Ascending aorta (tissue), 2 donors: ENCODE measurements at regions of chr2 and their contacts with region 1.

Region 1: DNA sequence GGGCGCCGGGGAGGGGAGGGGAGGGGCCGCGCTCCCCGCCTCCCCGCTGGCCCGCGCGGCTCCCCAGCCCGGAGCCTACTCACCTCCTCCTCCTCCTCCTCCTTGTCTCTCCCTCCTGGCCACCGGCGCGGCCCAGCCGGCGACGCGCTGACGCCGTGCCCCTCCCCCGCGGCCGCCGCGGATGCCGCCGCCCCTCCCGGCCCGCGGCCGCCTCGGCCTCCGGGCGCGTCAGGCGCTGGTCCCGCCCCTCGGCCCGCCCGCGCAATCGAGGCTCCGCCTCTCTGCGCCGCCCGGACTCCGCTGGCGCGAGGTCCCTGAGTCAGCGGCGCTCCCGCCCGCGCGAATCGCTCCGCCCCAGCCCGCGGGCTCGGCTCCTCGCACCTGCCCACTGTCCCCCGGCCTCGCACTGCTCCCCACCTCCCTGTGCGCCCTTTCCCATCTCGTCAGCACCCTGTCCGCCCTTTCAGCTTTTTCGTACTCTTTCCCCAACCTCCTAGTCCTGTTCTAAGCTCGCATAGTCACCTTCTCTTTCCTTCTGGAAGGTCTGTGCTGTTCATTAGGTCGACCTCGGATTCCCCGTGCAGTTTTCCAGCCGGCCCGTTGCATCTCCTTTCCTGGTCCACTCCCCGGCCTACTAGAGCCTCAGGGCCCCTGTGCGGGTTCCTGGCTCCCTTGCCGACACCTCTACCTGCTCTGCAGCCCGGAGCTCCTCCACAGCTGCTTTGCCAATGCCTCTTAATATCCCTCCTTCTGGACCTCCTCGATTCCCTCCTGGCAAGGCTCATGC is 187.4 kb downstream of the ZEB2 start:
- DNase-seq: peak; percentile 33 to 92
- H3K4me3 ChIP-seq: peak overlapping the region; percentile 66 to 94
- H3K27ac ChIP-seq: peak overlapping the region; percentile 85 to 88
- H3K4me1 ChIP-seq: no peaks in the 10 kb centered on the region
- H3K27me3 ChIP-seq: no peaks in the 10 kb centered on the region
- CTCF ChIP-seq: no peak

Region 2: GRCh38 chr2:144382849-144383248 is 50.3 kb after region 1 on chr2:
- intact Hi-C with region 1: loop called (anchors 2 kb)
- DNase-seq: no peak
- H3K4me3 ChIP-seq: no peak overlapping the region
- H3K27ac ChIP-seq: peak overlapping the region in 1 of 2 donors; percentile 17
- H3K4me1 ChIP-seq: peaks cover 0 to 7% of the 10 kb centered on the region in 2 donors
- H3K27me3 ChIP-seq: no peaks in the 10 kb centered on the region
- CTCF ChIP-seq: no peak

Region 3: DNA sequence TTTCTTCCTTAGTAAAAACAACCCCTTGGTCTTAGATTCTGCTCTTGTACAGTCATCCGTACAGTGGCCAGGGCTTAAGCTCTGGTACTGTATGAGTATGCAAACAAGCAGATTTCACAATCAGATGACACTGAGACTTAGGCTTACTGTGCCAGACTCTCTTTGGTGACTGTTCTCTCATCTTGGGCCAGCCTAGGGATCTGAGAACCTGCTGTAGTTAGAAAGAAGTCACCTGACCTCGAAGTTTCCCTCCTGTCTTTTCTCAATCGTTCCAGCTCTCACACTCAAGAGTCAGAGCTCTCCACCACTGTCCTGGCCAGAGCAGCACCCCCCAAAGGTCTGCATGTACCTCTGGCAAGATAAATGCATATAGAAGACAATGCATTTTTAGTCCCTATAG is 124.1 kb after region 1 on chr2:
- intact Hi-C with region 1: loop called (anchors 1 kb)
- DNase-seq: peak in 1 of 2 donors; percentile 70
- H3K4me3 ChIP-seq: no peak overlapping the region
- H3K27ac ChIP-seq: peak overlapping the region in 1 of 2 donors; percentile 43
- H3K4me1 ChIP-seq: peaks cover 11 to 63% of the 10 kb centered on the region in 2 donors
- H3K27me3 ChIP-seq: no peaks in the 10 kb centered on the region
- CTCF ChIP-seq: no peak

Region 4: GRCh38 chr2:144572977-144573376 is 240.4 kb after region 1 on chr2:
- intact Hi-C with region 1: no loop called
- DNase-seq: no peak
- H3K4me3 ChIP-seq: no peak overlapping the region
- H3K27ac ChIP-seq: no peak overlapping the region
- H3K4me1 ChIP-seq: no peaks in the 10 kb centered on the region
- H3K27me3 ChIP-seq: no peaks in the 10 kb centered on the region
- CTCF ChIP-seq: no peak

Region 5: GRCh38 chr2:144785253-144785652 is 452.7 kb after region 1 on chr2:
- intact Hi-C with region 1: no loop called
- DNase-seq: no peak
- H3K4me3 ChIP-seq: no peak overlapping the region
- H3K27ac ChIP-seq: no peak overlapping the region
- H3K4me1 ChIP-seq: no peaks in the 10 kb centered on the region
- H3K27me3 ChIP-seq: no peaks in the 10 kb centered on the region
- CTCF ChIP-seq: no peak

Region 6: GRCh38 chr2:144937910-144938709 is 605.6 kb after region 1 on chr2:
- intact Hi-C with region 1: loop called (anchors 10 kb)
- DNase-seq: no peak
- H3K4me3 ChIP-seq: peak overlapping the region; percentile 11 to 48
- H3K27ac ChIP-seq: peak overlapping the region; percentile 76 to 82
- H3K4me1 ChIP-seq: peaks cover 7 to 44% of the 10 kb centered on the region in 2 donors
- H3K27me3 ChIP-seq: no peaks in the 10 kb centered on the region
- CTCF ChIP-seq: no peak

Region 7: GRCh38 chr2:145752091-145752806 is 1419.7 kb after region 1 on chr2:
- intact Hi-C with region 1: loop called (anchors 5 kb)
- DNase-seq: peak in 1 of 2 donors; percentile 64
- H3K4me3 ChIP-seq: peak overlapping the region in 1 of 2 donors; percentile 26
- H3K27ac ChIP-seq: peak overlapping the region; percentile 51 to 62
- H3K4me1 ChIP-seq: peaks cover 3 to 21% of the 10 kb centered on the region in 2 donors
- H3K27me3 ChIP-seq: no peaks in the 10 kb centered on the region
- CTCF ChIP-seq: peak; percentile 41 to 71 (median 56)